Panc1 (cell line): ENCODE measurements at regions of chr17 and their contacts with region 1.

Region 1: GRCh38 chr17:49290690-49291359 is 60.2 kb upstream of the PHOSPHO1 start:
- DNase-seq: peak; percentile 12
- ATAC-seq: peak; percentile 72
- H3K4me3 ChIP-seq: no peak overlapping the region
- H3K27ac ChIP-seq: no peak overlapping the region
- H3K4me1 ChIP-seq: no peaks in the 10 kb centered on the region
- H3K27me3 ChIP-seq: no peaks in the 10 kb centered on the region
- CTCF ChIP-seq: peak; percentile 77

Region 2: GRCh38 chr17:49528966-49529365 is 238.1 kb after region 1 on chr17:
- CTCF ChIA-PET with region 1: no interaction called
- POLR2A ChIA-PET with region 1: interaction called, 12 read pairs
- in situ Hi-C with region 1: no loop called
- intact Hi-C with region 1: no loop called
- DNase-seq: no peak
- ATAC-seq: no peak
- H3K4me3 ChIP-seq: no peak overlapping the region
- H3K27ac ChIP-seq: no peak overlapping the region
- H3K4me1 ChIP-seq: no peaks in the 10 kb centered on the region
- H3K27me3 ChIP-seq: 0 out of 2 replicates have a peak, but pooled peaks cover 6% of the 10 kb centered on the region
- CTCF ChIP-seq: no peak